ENCODE measurements at regions of chr11 and their contacts with region 1.

Region 1: GRCh38 chr11:19553683-19554333 is 158.8 kb upstream of the NAV2 start:
- DNase-seq: peak; percentile 80
- H3K4me3 ChIP-seq: peak overlapping the region in 1 of 2 experiments; percentile 17; a peak in 1 of 4 replicates
- H3K27ac ChIP-seq: no peak overlapping the region
- H3K4me1 ChIP-seq: peaks cover 0 to 14% of the 10 kb centered on the region in 2 experiments; a peak in 2 of 4 replicates
- H3K27me3 ChIP-seq: peaks cover 6% of the 10 kb centered on the region; the same call in 1 of the 2 replicates
- CTCF ChIP-seq: peak; percentile 86
- EP300 ChIP-seq: no peak
- RAD21 ChIP-seq: peak; percentile 99

Region 2: GRCh38 chr11:19253153-19253745 is 300.6 kb before region 1 on chr11:
- CTCF ChIA-PET with region 1: interaction called, 152 read pairs
- POLR2A ChIA-PET with region 1: no interaction called
- DNase-seq: no peak
- H3K4me3 ChIP-seq: no peak overlapping the region
- H3K27ac ChIP-seq: no peak overlapping the region
- H3K4me1 ChIP-seq: peaks cover 0 to 10% of the 10 kb centered on the region in 2 experiments; a peak in 1 of 4 replicates
- H3K27me3 ChIP-seq: peaks cover 8% of the 10 kb centered on the region; the same call in 1 of the 2 replicates
- CTCF ChIP-seq: no peak
- EP300 ChIP-seq: no peak
- RAD21 ChIP-seq: no peak

Region 3: GRCh38 chr11:19306179-19306944 is 247.4 kb before region 1 on chr11:
- CTCF ChIA-PET with region 1: interaction called, 27 read pairs
- POLR2A ChIA-PET with region 1: no interaction called
- DNase-seq: no peak
- H3K4me3 ChIP-seq: no peak overlapping the region
- H3K27ac ChIP-seq: no peak overlapping the region
- H3K4me1 ChIP-seq: peaks cover 0 to 3% of the 10 kb centered on the region in 2 experiments; a peak in 1 of 4 replicates
- H3K27me3 ChIP-seq: peaks cover 14% of the 10 kb centered on the region; the same call in 1 of the 2 replicates
- CTCF ChIP-seq: no peak
- EP300 ChIP-seq: no peak
- RAD21 ChIP-seq: no peak

Region 4: GRCh38 chr11:19410032-19410431 is 143.8 kb before region 1 on chr11:
- CTCF ChIA-PET with region 1: no interaction called
- POLR2A ChIA-PET with region 1: no interaction called
- DNase-seq: no peak
- H3K4me3 ChIP-seq: no peak overlapping the region
- H3K27ac ChIP-seq: no peak overlapping the region
- H3K4me1 ChIP-seq: no peaks in the 10 kb centered on the region
- H3K27me3 ChIP-seq: peaks cover 7% of the 10 kb centered on the region; the same call in 1 of the 2 replicates
- CTCF ChIP-seq: no peak
- EP300 ChIP-seq: no peak
- RAD21 ChIP-seq: no peak

Region 5: GRCh38 chr11:19536131-19536530 is 17.7 kb before region 1 on chr11:
- CTCF ChIA-PET with region 1: interaction called, 15 read pairs
- POLR2A ChIA-PET with region 1: no interaction called
- DNase-seq: no peak
- H3K4me3 ChIP-seq: no peak overlapping the region
- H3K27ac ChIP-seq: no peak overlapping the region
- H3K4me1 ChIP-seq: no peaks in the 10 kb centered on the region; a peak in 1 of 4 replicates
- H3K27me3 ChIP-seq: peaks cover 23% of the 10 kb centered on the region; the same call in 1 of the 2 replicates
- CTCF ChIP-seq: no peak
- EP300 ChIP-seq: no peak
- RAD21 ChIP-seq: no peak

Region 6: GRCh38 chr11:19800162-19800561 is 246.4 kb after region 1 on chr11:
- CTCF ChIA-PET with region 1: interaction called, 11 read pairs
- POLR2A ChIA-PET with region 1: no interaction called
- DNase-seq: no peak
- H3K4me3 ChIP-seq: no peak overlapping the region
- H3K27ac ChIP-seq: no peak overlapping the region
- H3K4me1 ChIP-seq: peaks cover 14 to 59% of the 10 kb centered on the region in 2 experiments
- H3K27me3 ChIP-seq: no peaks in the 10 kb centered on the region
- CTCF ChIP-seq: peak; percentile 45; the same call in 1 of the 2 replicates
- EP300 ChIP-seq: no peak
- RAD21 ChIP-seq: peak; percentile 54